ENCODE measurements at regions of chr7 and their contacts with region 1.

Region 1: GRCh38 chr7:143345428-143345900 is 17.0 kb downstream of the FAM131B start:
- DNase-seq: peak; percentile 75
- H3K4me3 Mint-ChIP-seq: peak overlapping the region; percentile 59
- H3K27ac Mint-ChIP-seq: no peak overlapping the region
- H3K4me1 Mint-ChIP-seq: peaks cover 11% of the 10 kb centered on the region
- H3K27me3 Mint-ChIP-seq: peaks cover 33% of the 10 kb centered on the region

Region 2: GRCh38 chr7:143334244-143334643 is 11.2 kb before region 1 on chr7:
- CTCF ChIA-PET with region 1: interaction called, 20 read pairs
- POLR2A ChIA-PET with region 1: no interaction called
- DNase-seq: no peak
- H3K4me3 Mint-ChIP-seq: no peak overlapping the region
- H3K27ac Mint-ChIP-seq: no peak overlapping the region
- H3K4me1 Mint-ChIP-seq: no peaks in the 10 kb centered on the region
- H3K27me3 Mint-ChIP-seq: peaks cover 25% of the 10 kb centered on the region

Region 3: DNA sequence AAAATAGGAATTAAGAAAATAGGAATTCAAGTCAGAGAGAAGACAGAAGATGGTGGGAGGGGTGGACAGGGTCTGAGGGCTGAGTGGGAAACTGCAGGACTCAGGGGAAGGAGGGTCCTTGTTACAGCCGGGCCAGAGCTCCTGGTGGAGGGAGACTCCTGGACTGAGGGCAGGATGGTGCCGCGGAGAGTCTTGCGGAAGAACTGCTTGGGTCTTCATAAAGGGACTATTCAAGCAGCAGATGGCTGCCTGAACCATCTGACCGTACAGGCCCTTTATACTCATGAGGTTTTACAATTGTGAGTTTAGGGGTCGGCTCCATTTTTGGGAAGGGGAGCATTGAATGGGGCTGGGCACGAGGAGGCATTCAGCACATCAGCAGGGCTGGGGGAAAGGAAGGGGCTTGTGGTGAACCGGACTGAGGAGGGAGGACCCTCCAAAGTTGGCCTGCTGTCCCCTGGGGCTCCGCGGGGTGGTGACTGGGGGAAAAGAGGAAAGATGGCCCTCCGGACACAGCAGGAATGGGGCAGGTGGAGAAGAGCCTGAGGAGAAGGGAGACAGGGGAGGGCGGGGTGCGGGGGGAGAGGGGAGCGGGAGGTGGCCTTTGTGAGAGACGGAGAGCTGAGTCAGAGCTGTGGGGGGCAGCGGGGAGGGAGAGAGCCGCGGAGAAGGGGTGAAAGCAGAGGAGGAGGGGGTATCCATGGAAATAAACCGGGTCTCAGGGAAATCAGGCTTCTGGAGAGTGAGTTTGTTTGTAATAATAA is 15.5 kb after region 1 on chr7:
- CTCF ChIA-PET with region 1: interaction called, 12 read pairs
- POLR2A ChIA-PET with region 1: no interaction called
- DNase-seq: no peak
- H3K4me3 Mint-ChIP-seq: peak overlapping the region; percentile 56
- H3K27ac Mint-ChIP-seq: no peak overlapping the region
- H3K4me1 Mint-ChIP-seq: peaks cover 10% of the 10 kb centered on the region
- H3K27me3 Mint-ChIP-seq: peaks cover 58% of the 10 kb centered on the region

Region 4: GRCh38 chr7:143385891-143386781 is 40.7 kb after region 1 on chr7:
- CTCF ChIA-PET with region 1: interaction called, 11 read pairs
- POLR2A ChIA-PET with region 1: no interaction called
- DNase-seq: peak; percentile 64
- H3K4me3 Mint-ChIP-seq: no peak overlapping the region
- H3K27ac Mint-ChIP-seq: no peak overlapping the region
- H3K4me1 Mint-ChIP-seq: peaks cover 21% of the 10 kb centered on the region
- H3K27me3 Mint-ChIP-seq: no peaks in the 10 kb centered on the region

Measured in activated CD4-positive, alpha-beta memory T cell treated with anti-CD3 and anti-CD28 coated beads, Interleukin-2, amount 10 ng/mL, durations not matched to agents 7 days and 5 days (primary cell).